Activated naive CD4-positive, alpha-beta T cell treated with anti-CD3 and anti-CD28 coated beads for 36 hours (primary cell): ENCODE measurements at regions of chr1 and their contacts with region 1.

Region 1: DNA sequence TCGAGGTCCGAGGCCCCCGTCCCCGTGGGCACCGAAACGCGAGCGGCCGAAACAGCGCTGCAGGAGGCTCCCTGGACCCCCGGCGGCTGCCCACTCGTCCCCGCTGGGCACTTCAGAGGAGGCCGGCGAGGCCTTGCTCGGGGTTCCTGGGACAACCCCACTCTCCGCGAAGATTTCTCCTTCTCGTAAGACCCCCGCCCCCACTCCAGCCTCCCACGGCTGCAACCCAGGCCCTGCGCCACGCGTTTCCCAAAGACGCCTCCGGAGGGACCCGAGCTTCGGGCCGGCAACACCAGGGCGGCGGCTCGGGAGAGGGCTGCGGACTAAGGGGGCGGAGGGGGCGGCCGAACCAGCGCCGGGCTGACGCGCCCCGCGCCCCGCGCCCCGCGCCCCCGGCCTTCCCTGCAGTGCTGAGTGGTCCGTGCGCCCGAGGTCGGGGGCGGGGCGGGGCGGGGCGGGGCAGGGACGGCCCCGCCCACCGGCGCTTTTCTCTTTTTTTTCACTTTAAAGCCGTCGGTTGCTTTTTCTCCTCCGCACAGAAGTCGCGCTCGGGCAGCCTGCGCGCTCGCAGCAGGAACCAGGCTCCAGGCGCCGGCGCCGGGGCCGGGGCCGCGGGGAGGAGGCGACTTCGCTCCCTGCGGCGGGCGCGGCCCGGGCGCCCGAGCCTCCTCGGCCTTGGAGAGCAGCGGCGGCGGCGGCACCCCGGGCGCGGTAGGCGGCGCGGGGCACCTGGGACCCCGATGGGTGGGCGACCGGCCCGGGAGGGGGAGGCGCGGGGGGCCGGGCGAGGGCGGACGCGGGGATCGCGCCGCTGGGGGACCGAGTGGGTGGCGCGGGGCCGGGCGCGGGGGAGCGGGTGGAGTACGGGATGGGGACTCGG is at the start of gene SPSB1:
- DNase-seq: peak; percentile 73
- H3K4me3 Mint-ChIP-seq: peak within 1 kb of the TSS; percentile 31
- H3K27ac Mint-ChIP-seq: no peak within 1 kb of the TSS
- H3K4me1 Mint-ChIP-seq: peaks cover 23% of the 10 kb centered on the region
- H3K27me3 Mint-ChIP-seq: no peaks in the 10 kb centered on the region
- total RNA-seq, gene SPSB1: 4.8 to 5.0 TPM

Region 2: DNA sequence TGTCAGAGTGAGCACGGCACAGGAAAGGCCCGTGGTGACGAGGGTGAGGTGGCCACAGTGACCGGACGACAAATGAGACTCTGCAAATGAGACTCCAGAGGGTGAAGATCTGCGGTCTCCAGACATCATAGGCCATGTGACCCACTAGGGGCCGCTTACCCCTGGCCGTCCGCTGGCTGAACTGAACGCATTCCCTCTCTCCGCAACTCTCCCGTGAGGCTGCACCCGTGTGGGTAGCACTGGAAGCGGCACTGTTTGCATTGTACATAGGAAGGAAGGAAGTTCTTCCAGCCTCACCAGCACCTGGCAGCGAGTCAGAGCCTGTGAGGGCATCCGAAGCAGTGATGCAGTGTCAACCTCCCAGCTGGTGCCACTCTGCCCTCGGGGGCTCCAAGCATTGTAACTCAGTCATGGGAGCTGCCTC is 23.5 kb before region 1 on chr1:
- CTCF ChIA-PET with region 1: interaction called, 10 read pairs
- intact Hi-C with region 1: no loop called
- DNase-seq: no peak
- H3K4me3 Mint-ChIP-seq: no peak overlapping the region
- H3K27ac Mint-ChIP-seq: no peak overlapping the region
- H3K4me1 Mint-ChIP-seq: peaks cover 3% of the 10 kb centered on the region
- H3K27me3 Mint-ChIP-seq: no peaks in the 10 kb centered on the region

Region 3: DNA sequence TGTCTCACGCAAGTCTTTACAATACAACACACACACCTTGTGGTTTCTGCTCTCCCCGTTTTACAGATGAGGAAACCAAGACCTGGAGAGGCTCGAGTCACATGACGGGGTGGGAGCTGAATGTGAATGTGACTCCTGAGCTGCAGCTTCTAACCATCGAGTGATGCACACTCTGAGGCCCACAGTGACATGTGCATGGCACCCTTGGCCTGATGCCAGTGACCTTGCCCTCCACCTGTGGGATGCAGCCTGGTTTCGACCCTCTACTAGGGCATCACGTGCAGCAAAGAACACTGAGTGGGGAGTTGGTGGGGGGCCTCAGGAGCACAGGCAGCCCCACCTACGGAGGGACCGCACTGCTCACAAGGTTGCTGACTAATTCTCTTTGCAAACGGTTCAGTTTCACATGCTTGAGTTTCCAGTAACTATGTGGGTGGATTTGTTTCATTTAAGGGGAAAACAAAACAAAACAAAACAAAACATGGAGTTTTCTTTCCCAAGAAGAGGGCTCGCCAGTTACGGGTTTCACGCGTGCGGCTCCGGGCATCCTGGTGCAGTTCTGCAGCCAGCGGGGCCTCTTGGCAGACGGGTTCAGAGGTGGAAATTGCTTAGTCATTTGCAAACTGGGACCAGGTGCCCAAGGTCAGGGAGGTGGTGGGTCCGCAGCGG is 22.9 kb after region 1 on chr1:
- CTCF ChIA-PET with region 1: interaction called, 4 read pairs
- intact Hi-C with region 1: loop called (anchors 1 kb)
- DNase-seq: peak; percentile 79
- H3K4me3 Mint-ChIP-seq: peak overlapping the region; percentile 30
- H3K27ac Mint-ChIP-seq: peak overlapping the region; percentile 83
- H3K4me1 Mint-ChIP-seq: peaks cover 39% of the 10 kb centered on the region
- H3K27me3 Mint-ChIP-seq: no peaks in the 10 kb centered on the region

Region 4: GRCh38 chr1:9428601-9429341 is 136.2 kb after region 1 on chr1:
- CTCF ChIA-PET with region 1: interaction called, 6 read pairs
- intact Hi-C with region 1: loop called (anchors 1 kb)
- DNase-seq: peak; percentile 100
- H3K4me3 Mint-ChIP-seq: peak overlapping the region; percentile 98
- H3K27ac Mint-ChIP-seq: peak overlapping the region; percentile 95
- H3K4me1 Mint-ChIP-seq: peaks cover 46% of the 10 kb centered on the region
- H3K27me3 Mint-ChIP-seq: no peaks in the 10 kb centered on the region

Region 5: GRCh38 chr1:9486466-9487140 is 194.0 kb after region 1 on chr1:
- CTCF ChIA-PET with region 1: interaction called, 64 read pairs
- intact Hi-C with region 1: loop called (anchors 1 kb)
- DNase-seq: no peak
- H3K4me3 Mint-ChIP-seq: no peak overlapping the region
- H3K27ac Mint-ChIP-seq: no peak overlapping the region
- H3K4me1 Mint-ChIP-seq: no peaks in the 10 kb centered on the region
- H3K27me3 Mint-ChIP-seq: no peaks in the 10 kb centered on the region